Natural killer cell (primary cell): ENCODE measurements at regions of chr10 and their contacts with region 1.

Region 1: DNA sequence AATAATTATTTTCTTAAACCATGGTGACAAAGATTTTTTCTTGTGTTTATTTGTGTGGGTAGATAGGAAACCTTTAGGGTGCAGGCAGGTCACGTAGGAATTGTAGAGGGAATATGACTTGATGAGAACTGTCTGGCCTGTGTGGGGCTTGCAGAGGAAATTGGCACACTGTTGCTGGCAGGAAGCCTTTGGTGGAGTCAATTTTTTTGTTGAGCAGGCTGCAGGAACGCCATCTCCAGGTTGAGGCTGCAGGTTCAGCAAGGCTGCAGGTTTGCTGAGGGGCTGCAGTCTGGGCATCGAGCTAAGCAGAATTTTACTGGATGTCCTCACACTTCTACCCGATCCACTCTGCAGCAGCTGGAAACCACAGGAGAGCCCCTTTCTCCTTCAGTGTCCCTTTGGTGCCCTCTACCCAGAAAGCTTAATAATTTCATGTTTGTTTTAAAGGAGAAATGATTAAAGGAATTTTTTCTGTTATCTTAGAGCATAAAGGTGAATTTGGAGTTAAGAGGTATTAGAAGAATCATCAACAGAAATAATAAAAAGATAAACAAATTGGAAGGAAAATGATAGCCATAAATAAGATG is 37.0 kb downstream of the TBC1D12 start:
- DNase-seq: no peak
- ATAC-seq: no peak
- H3K4me3 ChIP-seq: no peak overlapping the region
- H3K4me3 Mint-ChIP-seq: no peak overlapping the region
- H3K27ac ChIP-seq: no peak overlapping the region
- H3K27ac Mint-ChIP-seq: no peak overlapping the region
- H3K4me1 ChIP-seq: no peaks in the 10 kb centered on the region
- H3K4me1 Mint-ChIP-seq: no peaks in the 10 kb centered on the region
- H3K27me3 ChIP-seq: no peaks in the 10 kb centered on the region
- H3K27me3 Mint-ChIP-seq: peaks cover 0 to 7% of the 10 kb centered on the region in 2 donors
- CTCF ChIP-seq: no peak

Region 2: DNA sequence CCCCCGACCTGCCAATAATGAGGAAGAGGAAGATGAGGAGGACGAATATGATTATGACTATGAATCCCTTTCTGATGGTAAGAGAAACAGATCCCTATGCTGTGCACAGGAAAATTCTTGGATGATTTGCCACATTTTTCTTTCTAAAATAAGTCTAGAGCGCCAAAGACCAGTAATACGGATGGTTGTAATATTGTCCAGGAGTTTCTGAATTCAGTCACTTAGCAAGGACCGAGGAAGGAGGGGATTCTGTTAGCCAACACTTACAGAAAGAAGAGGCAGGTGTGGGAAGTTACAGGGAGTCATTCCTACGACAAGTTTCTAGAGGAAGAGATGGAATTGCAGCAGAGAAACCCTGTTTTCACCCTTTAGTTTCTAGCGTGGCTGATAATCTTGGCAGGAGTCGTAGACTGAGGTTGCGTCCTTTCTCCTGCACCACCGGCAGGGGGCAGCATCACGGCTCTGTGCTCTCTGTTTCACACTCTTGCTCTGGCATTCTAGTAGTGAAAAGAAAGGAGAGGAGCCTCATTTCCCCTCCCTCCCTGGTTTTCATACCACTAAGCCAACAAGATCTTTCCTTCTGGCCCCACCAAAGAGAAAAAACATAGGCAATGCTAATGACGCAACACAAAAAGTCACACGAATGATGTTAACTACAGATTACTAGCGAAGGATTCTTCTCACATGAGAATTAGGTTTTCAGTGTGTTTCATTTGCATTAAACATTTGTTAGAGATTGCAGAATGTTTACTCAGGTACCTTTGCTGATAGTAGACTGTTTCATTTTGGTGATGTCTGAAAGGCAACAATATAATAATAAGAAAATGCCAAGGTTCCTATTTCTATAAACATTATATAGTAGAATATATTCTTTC is 159.3 kb before region 1 on chr10:
- intact Hi-C with region 1: loop called (anchors 2 kb)
- DNase-seq: peak; percentile 24 to 75
- ATAC-seq: peak; percentile 49 to 80 (median 60)
- H3K4me3 ChIP-seq: no peak overlapping the region
- H3K4me3 Mint-ChIP-seq: no peak overlapping the region
- H3K27ac ChIP-seq: no peak overlapping the region
- H3K27ac Mint-ChIP-seq: no peak overlapping the region
- H3K4me1 ChIP-seq: no peaks in the 10 kb centered on the region
- H3K4me1 Mint-ChIP-seq: peaks cover 0 to 9% of the 10 kb centered on the region in 2 donors
- H3K27me3 ChIP-seq: peaks cover 6% of the 10 kb centered on the region
- H3K27me3 Mint-ChIP-seq: peaks cover 16 to 29% of the 10 kb centered on the region in 2 donors
- CTCF ChIP-seq: peak; percentile 80